Activated CD4-positive, alpha-beta memory T cell treated with anti-CD3 and anti-CD28 coated beads, Interleukin-2, amount 10 ng/mL, durations not matched to agents 7 days and 5 days (primary cell): ENCODE measurements at regions of chr10 and their contacts with region 1.

Region 1: GRCh38 chr10:80453701-80454513 is at the start of gene TSPAN14:
- DNase-seq: peak; percentile 83
- H3K4me3 Mint-ChIP-seq: peak within 1 kb of the TSS; percentile 94
- H3K27ac Mint-ChIP-seq: peak within 1 kb of the TSS; percentile 97
- H3K4me1 Mint-ChIP-seq: peaks cover 43% of the 10 kb centered on the region
- H3K27me3 Mint-ChIP-seq: no peaks in the 10 kb centered on the region
- total RNA-seq, gene TSPAN14: 130 to 136 TPM

Region 2: DNA sequence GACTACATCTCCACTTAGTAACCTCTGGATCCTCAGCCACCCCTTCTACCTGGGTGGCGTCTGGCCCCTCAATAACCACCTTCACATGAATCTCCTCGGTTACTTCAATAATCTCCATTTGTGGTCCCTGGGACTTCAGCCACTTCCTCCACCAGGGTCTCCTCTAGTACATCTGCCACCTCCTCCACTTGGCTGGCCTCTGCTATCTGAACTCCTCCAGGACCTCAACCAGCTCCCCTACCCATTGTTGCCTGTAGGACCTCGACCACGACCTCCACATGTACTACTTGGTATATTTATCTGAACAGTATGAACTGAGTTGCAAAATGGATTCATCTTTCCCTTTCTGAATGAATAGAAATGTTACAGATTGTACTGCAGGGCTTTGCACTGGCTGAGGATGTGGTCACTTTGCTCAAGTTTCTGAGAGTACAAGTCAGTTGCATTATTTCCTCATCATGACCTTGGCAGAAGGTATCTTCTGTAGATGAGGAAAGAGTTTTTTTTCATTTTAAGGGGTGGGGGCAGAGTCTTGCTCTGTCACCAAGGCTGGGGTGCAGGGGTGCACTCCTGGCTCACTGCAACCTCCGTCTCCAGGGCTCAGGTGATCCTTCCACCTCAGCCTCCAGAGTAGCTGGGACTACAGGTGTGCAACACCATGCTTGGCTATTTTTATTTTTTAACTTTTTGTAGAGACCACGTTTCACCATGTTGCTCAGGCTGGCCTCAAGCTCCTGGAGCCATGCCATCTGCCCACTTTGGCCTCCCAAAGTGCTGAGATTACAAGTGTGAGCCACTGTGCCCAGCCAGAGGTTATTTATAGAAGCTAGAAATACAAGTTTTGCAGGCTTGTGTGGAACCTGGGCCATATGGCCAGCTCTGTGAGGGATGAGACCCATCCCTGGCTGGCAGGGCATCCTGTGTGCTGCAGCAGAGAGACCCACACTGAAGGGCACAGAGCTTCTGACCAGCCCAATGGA is 200.4 kb before region 1 on chr10:
- CTCF ChIA-PET with region 1: no interaction called
- POLR2A ChIA-PET with region 1: no interaction called
- DNase-seq: peak; percentile 26
- H3K4me3 Mint-ChIP-seq: no peak overlapping the region
- H3K27ac Mint-ChIP-seq: peak overlapping the region; percentile 69
- H3K4me1 Mint-ChIP-seq: peaks cover 20% of the 10 kb centered on the region
- H3K27me3 Mint-ChIP-seq: peaks cover 4% of the 10 kb centered on the region

Region 3: GRCh38 chr10:80472234-80473095 is 18.6 kb after region 1 on chr10:
- CTCF ChIA-PET with region 1: interaction called, 82 read pairs
- POLR2A ChIA-PET with region 1: interaction called, 182 read pairs
- DNase-seq: peak; percentile 50
- H3K4me3 Mint-ChIP-seq: peak overlapping the region; percentile 36
- H3K27ac Mint-ChIP-seq: peak overlapping the region; percentile 83
- H3K4me1 Mint-ChIP-seq: peaks cover 86% of the 10 kb centered on the region
- H3K27me3 Mint-ChIP-seq: no peaks in the 10 kb centered on the region

Region 4: DNA sequence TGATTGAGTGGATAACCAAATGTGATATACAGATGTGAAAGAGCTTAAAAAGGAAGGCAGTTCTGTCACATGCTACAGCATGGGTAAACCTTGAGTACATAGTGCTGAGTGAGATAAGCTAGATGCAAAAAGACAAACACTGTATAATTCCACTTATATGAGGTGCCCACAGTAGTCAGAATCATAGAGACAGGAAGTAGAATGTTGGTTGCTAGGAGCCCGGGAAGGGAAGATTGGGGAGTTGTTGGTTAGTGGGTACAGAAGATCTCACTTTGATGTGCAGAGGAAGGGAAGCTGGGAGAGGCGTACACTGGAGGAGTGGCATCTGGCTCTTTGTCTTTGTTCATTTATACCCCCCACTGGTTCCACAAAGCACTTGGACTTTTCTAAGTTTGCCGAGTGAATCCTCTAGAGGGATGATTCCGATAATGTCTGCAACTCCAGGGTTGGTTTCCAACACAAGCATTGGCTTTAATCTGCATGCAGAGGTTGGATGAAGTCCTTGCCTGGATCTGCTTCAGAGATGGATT is 39.7 kb after region 1 on chr10:
- CTCF ChIA-PET with region 1: interaction called, 414 read pairs
- POLR2A ChIA-PET with region 1: interaction called, 404 read pairs
- DNase-seq: no peak
- H3K4me3 Mint-ChIP-seq: peak overlapping the region; percentile 15
- H3K27ac Mint-ChIP-seq: peak overlapping the region; percentile 76
- H3K4me1 Mint-ChIP-seq: peaks cover 97% of the 10 kb centered on the region
- H3K27me3 Mint-ChIP-seq: no peaks in the 10 kb centered on the region

Region 5: GRCh38 chr10:80498833-80499741 is 45.2 kb after region 1 on chr10:
- CTCF ChIA-PET with region 1: interaction called, 414 read pairs
- POLR2A ChIA-PET with region 1: interaction called, 404 read pairs
- DNase-seq: peak; percentile 70
- H3K4me3 Mint-ChIP-seq: peak overlapping the region; percentile 52
- H3K27ac Mint-ChIP-seq: peak overlapping the region; percentile 92
- H3K4me1 Mint-ChIP-seq: peaks cover 97% of the 10 kb centered on the region
- H3K27me3 Mint-ChIP-seq: no peaks in the 10 kb centered on the region